MCF 10A (cell line): ENCODE measurements at regions of chr2 and their contacts with region 1.

Region 1: DNA sequence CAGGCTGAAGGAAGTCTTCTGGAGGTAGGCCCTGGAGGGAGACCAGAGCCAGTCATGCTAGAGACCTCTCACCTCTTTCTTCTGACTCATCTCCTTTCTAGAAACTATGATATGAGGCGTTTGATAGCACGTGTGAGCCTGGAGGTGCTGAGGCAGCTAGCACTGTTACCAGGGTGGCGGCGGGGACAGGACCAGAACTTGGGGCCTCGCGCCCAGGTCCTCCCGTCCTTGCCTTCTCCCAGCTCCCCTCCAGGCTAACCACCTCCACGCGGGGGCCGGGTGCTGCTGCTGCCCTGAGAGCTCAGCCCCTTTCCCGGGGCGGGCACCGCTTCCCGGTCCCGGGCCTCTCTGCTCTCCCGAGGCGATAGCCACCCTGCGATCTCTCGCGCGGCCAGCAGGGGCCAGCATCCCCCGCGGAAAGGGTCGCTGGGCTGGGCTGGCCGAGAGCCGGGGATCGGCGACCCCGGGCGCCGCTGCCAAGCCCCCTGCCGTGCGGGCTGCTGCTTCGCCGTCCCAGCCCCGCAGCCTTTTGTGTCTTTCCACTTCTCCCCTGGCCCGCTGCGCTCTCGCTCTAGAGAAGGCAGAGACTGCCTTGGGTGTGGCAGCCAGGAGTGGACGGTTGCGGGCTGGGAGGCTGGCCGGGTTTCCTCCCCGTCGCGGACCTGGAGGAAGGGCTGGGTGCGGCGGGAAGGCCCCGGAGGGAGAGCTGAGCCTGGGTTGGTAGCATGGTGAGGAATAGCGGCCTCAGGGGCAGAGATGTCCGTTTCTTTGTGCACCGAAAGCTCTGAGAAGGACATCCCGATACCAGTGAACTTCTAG is 49.1 kb downstream of the TMEM17 start:
- DNase-seq: peak; percentile 70
- H3K4me3 Mint-ChIP-seq: peak overlapping the region; percentile 66
- H3K27ac Mint-ChIP-seq: peak overlapping the region; percentile 57
- H3K4me1 Mint-ChIP-seq: peaks cover 10% of the 10 kb centered on the region
- H3K27me3 Mint-ChIP-seq: no peaks in the 10 kb centered on the region
- CTCF ChIP-seq: peak; percentile 98

Region 2: GRCh38 chr2:62469548-62469947 is 12.6 kb after region 1 on chr2:
- CTCF ChIA-PET with region 1: interaction called, 15 read pairs
- POLR2A ChIA-PET with region 1: interaction called, 5 read pairs
- intact Hi-C with region 1: no loop called
- DNase-seq: no peak
- H3K4me3 Mint-ChIP-seq: no peak overlapping the region
- H3K27ac Mint-ChIP-seq: no peak overlapping the region
- H3K4me1 Mint-ChIP-seq: peaks cover 8% of the 10 kb centered on the region
- H3K27me3 Mint-ChIP-seq: no peaks in the 10 kb centered on the region
- CTCF ChIP-seq: no peak

Region 3: DNA sequence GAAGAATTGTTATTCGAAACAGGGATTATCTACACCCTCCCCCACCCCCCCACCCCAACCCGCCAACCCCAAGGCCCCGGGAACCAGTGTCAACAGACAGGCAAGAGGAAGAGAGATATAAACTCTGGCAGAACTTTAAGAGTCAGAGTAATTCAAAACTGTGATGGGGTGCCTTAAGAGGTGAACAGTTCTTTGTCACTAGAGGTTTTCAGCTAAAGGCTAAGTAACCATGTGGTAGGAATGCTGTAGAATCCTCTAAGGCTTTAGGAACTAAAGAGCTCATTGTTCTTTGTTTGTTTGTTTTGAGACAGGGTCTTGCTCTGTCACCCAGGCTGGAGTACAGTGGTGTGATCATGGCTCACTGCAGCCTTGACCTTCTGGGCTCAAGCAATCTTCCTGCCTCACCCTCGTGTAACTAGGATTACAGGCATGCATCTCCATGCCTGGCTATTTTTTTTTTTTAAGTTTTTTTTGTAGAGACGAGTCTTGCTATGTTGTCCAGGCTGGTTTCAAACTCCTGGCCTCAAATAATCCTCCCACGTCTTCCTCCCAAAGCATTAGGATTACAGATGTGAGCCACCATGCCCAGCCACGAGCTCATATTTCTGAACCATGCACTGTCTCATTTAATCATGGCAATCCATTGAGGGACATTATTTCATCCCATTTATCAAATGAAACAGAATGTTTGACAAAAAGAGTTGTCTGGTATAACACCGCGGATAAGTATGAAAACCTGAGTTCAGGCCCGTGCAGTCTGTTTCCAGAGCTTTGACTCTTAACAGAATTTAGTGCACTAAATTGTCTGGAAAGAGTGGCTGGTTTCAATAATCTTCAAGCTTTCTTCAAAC is 69.8 kb after region 1 on chr2:
- CTCF ChIA-PET with region 1: no interaction called
- POLR2A ChIA-PET with region 1: no interaction called
- intact Hi-C with region 1: no loop called
- DNase-seq: no peak
- H3K4me3 Mint-ChIP-seq: no peak overlapping the region
- H3K27ac Mint-ChIP-seq: no peak overlapping the region
- H3K4me1 Mint-ChIP-seq: no peaks in the 10 kb centered on the region
- H3K27me3 Mint-ChIP-seq: no peaks in the 10 kb centered on the region
- CTCF ChIP-seq: no peak

Region 4: GRCh38 chr2:62577994-62578781 is 121.3 kb after region 1 on chr2:
- CTCF ChIA-PET with region 1: interaction called, 3 read pairs
- POLR2A ChIA-PET with region 1: interaction called, 3 read pairs
- intact Hi-C with region 1: loop called (anchors 2 kb)
- DNase-seq: peak; percentile 94
- H3K4me3 Mint-ChIP-seq: peak overlapping the region; percentile 10
- H3K27ac Mint-ChIP-seq: peak overlapping the region; percentile 90
- H3K4me1 Mint-ChIP-seq: peaks cover 19% of the 10 kb centered on the region
- H3K27me3 Mint-ChIP-seq: no peaks in the 10 kb centered on the region
- CTCF ChIP-seq: no peak

Region 5: DNA sequence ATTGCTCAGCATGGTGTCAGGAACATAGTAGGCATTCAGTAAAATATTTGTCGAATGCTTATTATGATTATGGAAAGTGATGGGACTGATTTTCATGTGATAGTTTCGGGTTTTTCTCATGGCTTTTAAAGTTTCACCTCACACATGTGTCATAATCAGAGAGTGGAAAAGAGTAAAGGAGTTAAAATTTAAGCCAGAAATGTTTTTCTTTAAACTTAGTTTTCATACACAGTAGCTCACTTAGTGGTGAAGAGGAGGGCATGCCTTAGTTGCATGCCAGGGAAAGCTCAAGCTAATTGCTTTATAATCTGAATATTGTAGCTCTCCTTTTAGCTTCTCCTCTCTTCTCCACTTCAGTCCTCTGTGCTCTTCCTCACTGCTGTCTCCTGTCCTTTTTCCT is 286.6 kb after region 1 on chr2:
- CTCF ChIA-PET with region 1: interaction called, 15 read pairs
- POLR2A ChIA-PET with region 1: interaction called, 3 read pairs
- intact Hi-C with region 1: no loop called
- DNase-seq: no peak
- H3K4me3 Mint-ChIP-seq: no peak overlapping the region
- H3K27ac Mint-ChIP-seq: no peak overlapping the region
- H3K4me1 Mint-ChIP-seq: peaks cover 11% of the 10 kb centered on the region
- H3K27me3 Mint-ChIP-seq: no peaks in the 10 kb centered on the region
- CTCF ChIP-seq: no peak

Region 6: DNA sequence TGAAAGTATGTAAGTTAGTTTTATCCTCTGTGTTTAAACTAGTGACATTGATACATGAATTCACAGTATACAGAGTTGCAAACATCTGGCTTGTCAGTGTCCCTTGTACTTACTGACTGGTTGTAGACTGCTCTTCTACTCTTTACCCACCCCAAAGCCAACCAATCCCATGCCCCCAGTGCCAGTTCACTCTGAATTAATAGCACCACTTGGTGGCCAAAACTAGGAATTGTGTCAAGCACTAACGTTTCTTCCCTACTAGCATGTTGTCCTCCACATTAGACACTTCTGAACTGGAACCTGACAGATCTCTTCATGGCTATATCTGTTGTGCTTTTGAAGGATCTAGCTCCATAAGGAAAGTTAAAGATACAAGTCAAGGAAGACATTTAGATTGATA is 566.5 kb after region 1 on chr2:
- CTCF ChIA-PET with region 1: interaction called, 4 read pairs
- POLR2A ChIA-PET with region 1: no interaction called
- intact Hi-C with region 1: loop called (anchors 10 kb)
- DNase-seq: peak; percentile 67
- H3K4me3 Mint-ChIP-seq: no peak overlapping the region
- H3K27ac Mint-ChIP-seq: peak overlapping the region; percentile 52
- H3K4me1 Mint-ChIP-seq: peaks cover 5% of the 10 kb centered on the region
- H3K27me3 Mint-ChIP-seq: no peaks in the 10 kb centered on the region
- CTCF ChIP-seq: peak; percentile 35